Dorsolateral prefrontal cortex (tissue), 120 donors: ENCODE measurements at regions of chr17 and their contacts with region 1.

Region 1: DNA sequence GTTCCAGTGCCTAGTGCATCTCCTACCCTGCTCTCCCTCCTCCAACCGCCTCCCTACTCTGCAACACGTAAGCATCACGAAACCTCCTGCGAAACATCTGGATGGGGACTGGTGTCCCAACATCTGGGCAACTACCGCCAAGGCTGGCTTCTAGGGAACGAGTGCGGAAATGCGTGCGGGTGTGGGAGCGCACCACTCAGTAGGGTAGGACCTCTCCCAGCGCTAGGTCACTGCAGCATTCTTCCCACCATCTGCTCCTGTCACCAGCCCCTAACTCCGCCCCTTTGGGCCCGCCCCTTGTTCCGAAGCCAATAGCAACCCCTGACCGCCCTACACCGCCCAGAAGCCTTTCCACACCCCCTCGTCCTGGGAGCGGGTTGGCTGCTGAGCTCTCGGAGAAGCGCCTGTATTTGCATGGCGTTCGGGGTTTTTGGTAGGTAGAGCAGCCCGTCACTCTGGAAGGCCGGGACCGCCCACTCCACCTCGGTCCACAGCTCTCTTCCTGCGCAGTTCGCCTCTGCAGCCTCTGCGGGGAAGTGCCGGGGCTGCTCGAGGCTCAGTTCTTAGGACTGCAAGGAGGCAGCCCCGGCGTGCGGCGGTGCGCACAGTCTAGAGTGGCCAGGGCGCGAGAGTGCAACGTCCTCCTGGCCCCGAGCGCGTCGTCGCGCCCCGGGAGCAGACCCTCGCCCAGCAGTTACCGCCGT is at the start of gene HS3ST3B1:
- DNase-seq: peak; percentile 45 to 96 (median 83)
- H3K4me3 ChIP-seq: peak within 1 kb of the TSS; percentile 23 to 70 (median 52)
- H3K27ac ChIP-seq: peak within 1 kb of the TSS in 9 of 59 donors; percentile 7 to 65 (median 33)
- H3K27me3 ChIP-seq: peaks cover 15 to 100% (median 97%) of the 10 kb centered on the region in 45 donors
- CTCF ChIP-seq: peak in 6 of 56 donors; percentile 3 to 29 (median 10)
- total RNA-seq, gene HS3ST3B1: 0.41 to 18.5 (median 1.9) TPM

Region 2: GRCh38 chr17:13337864-13338371 is 962.8 kb before region 1 on chr17:
- intact Hi-C with region 1: loop called (anchors 5 to 10 kb)
- DNase-seq: peak in 2 of 10 donors; percentile 12 to 24
- H3K4me3 ChIP-seq: peak overlapping the region in 48 of 59 donors; percentile 1 to 63 (median 40)
- H3K27ac ChIP-seq: no peak overlapping the region
- H3K27me3 ChIP-seq: peaks cover 0 to 46% (median 8%) of the 10 kb centered on the region in 45 donors
- CTCF ChIP-seq: peak; percentile 52 to 82 (median 66)

Region 3: GRCh38 chr17:14337596-14338079 is 36.9 kb after region 1 on chr17:
- intact Hi-C with region 1: no loop called
- DNase-seq: no peak
- H3K4me3 ChIP-seq: no peak overlapping the region
- H3K27ac ChIP-seq: no peak overlapping the region
- H3K27me3 ChIP-seq: peaks cover 0 to 34% (median 7%) of the 10 kb centered on the region in 45 donors
- CTCF ChIP-seq: no peak

Region 4: DNA sequence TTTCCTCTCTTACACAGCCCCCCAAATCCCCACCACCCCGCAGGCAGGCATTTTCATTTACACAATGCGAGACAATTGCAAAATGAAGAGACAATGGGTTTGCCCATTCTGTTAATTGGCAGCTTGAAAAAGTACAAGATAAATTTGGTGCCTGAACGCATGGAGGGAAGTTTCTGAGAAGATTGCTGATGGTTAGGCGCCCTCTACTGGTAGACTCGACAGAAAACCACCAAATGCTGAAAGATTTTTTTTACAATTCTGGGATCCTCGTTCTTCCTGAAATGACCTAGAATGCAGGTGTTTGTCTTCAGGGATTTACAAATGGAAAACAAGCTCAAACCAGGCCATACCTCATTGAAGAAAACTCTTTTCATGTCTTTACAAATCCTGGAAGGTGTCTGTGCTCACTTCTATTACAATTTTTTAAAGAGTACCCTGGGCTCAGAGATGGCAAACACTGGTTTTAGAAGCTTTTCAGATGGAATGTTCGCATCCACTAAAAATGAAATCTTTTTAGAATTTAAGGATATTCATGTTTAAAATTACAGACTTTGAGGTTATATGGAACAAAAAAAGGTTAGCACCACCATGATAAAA is 625.9 kb after region 1 on chr17:
- intact Hi-C with region 1: loop called in 1 of 2 experiments (anchors 10 kb)
- DNase-seq: peak in 5 of 10 donors; percentile 29 to 52 (median 35)
- H3K4me3 ChIP-seq: no peak overlapping the region
- H3K27ac ChIP-seq: no peak overlapping the region
- H3K27me3 ChIP-seq: peaks cover 0 to 16% (median 0%) of the 10 kb centered on the region in 45 donors
- CTCF ChIP-seq: peak; percentile 69 to 93 (median 84)